Tibial artery (tissue), 4 donors: ENCODE measurements at regions of chr19 and their contacts with region 1.

Region 1: DNA sequence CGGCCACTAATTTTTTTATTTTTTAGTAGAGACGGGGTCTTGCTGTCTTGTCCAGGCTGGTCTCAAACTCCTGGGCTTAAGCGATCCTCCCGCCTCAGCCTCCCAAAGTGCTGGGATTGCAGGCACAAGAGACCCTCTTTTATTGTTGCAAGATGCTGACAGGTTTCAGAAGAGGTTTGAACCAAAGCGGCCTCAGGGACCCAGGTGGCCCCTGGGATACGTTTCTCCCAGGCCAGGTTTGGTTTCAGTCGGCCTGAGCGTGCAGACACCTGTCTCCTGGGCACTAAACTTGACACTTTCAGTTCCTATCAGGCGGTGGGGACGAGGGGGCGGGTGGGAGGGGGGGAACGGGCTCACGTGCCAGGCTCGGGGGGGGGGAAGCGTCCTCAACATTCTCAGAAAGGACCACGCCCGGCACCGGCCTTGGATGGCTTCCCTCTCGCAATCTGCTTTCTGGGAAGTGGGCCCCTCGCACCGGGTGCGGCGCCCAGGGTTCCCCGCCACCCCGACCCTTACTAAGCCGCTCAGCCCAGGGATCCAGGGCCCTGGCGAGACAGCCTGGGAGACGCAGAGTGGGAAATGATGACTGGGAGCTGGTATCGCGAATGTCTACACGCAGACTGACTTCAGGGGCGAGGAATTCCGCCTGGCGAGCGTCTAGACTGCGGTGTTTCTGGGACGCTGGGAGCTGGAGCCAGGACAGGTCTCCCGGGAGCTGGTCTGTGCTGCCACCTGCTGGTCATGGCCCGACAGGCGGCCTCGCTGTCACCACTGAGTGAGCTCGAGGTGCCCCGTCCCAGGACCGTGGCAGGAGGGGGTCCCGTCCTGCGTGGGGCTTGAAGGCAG is 91.6 kb downstream of the GNG7 start:
- DNase-seq: peak; percentile 90 to 96
- H3K4me3 ChIP-seq: peak overlapping the region; percentile 44 to 57
- H3K27ac ChIP-seq: peak overlapping the region; percentile 87 to 94
- H3K4me1 ChIP-seq: peaks cover 0 to 30% (median 18%) of the 10 kb centered on the region in 4 donors
- H3K27me3 ChIP-seq: peaks cover 0 to 15% of the 10 kb centered on the region in 2 donors
- CTCF ChIP-seq: peak; percentile 99

Region 2: DNA sequence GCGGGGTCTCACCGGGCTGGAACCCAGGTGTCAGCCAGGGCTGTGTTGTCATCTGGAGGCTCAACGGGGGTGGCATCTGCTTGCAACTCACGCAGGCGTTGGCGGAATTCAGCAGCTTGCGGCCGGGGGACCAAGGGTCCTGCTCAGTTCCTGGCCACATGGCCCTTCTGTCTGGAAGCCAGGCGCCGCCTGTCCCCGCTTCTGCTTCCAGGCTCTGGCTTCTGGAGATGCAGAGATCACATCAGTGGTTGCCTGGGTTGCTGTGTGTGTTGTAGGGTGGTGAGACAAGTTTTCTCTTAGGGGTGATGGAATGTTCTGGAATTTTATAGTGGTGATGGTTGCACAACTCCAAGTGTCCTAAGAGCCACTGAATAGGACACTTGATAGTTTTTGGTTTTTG is 700.7 kb before region 1 on chr19:
- intact Hi-C with region 1: no loop called
- DNase-seq: no peak
- H3K4me3 ChIP-seq: no peak overlapping the region
- H3K27ac ChIP-seq: no peak overlapping the region
- H3K4me1 ChIP-seq: peaks cover 0 to 53% (median 6%) of the 10 kb centered on the region in 4 donors
- H3K27me3 ChIP-seq: no peaks in the 10 kb centered on the region
- CTCF ChIP-seq: no peak

Region 3: DNA sequence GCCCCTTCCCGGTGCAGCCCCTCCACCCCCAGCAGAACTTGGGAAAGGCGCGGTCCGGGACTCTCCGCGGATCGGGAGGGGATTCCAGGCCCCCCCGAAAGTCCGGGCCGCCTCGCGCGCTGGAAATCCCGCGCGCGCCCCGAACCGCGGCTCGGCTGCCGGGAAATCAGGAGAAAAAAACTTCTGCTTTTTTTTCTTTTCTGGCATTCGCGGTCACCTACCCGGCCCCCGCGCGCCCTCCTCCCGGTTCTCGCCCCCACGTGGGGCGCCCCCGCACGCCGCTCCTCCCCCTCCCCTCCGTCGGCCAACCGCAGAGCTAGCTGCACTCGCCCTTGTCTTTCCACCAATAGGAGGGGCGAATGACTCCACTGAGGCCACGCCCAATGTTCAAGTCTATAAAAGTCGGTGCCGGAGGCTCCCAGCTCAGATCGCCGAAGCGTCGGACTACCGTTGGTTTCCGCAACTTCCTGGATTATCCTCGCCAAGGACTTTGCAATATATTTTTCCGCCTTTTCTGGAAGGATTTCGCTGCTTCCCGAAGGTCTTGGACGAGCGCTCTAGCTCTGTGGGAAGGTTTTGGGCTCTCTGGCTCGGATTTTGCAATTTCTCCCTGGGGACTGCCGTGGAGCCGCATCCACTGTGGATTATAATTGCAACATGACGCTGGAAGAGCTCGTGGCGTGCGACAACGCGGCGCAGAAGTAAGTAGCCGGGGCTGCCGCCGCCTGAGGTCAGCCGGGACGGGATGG is 135.0 kb before region 1 on chr19 and contains the start of gene GADD45B:
- intact Hi-C with region 1: loop called (anchors 1 kb)
- DNase-seq: peak; percentile 97 to 99
- H3K4me3 ChIP-seq: peak within 1 kb of the TSS; percentile 97 to 98
- H3K27ac ChIP-seq: peak within 1 kb of the TSS; percentile 96
- H3K4me1 ChIP-seq: peaks cover 6 to 22% (median 18%) of the 10 kb centered on the region in 4 donors
- H3K27me3 ChIP-seq: no peaks in the 10 kb centered on the region
- CTCF ChIP-seq: peak in 1 of 2 experiments; percentile 32

Region 4: GRCh38 chr19:2567996-2568395 is 42.9 kb before region 1 on chr19:
- intact Hi-C with region 1: no loop called
- DNase-seq: no peak
- H3K4me3 ChIP-seq: no peak overlapping the region
- H3K27ac ChIP-seq: no peak overlapping the region
- H3K4me1 ChIP-seq: no peaks in the 10 kb centered on the region
- H3K27me3 ChIP-seq: no peaks in the 10 kb centered on the region
- CTCF ChIP-seq: no peak

Region 5: DNA sequence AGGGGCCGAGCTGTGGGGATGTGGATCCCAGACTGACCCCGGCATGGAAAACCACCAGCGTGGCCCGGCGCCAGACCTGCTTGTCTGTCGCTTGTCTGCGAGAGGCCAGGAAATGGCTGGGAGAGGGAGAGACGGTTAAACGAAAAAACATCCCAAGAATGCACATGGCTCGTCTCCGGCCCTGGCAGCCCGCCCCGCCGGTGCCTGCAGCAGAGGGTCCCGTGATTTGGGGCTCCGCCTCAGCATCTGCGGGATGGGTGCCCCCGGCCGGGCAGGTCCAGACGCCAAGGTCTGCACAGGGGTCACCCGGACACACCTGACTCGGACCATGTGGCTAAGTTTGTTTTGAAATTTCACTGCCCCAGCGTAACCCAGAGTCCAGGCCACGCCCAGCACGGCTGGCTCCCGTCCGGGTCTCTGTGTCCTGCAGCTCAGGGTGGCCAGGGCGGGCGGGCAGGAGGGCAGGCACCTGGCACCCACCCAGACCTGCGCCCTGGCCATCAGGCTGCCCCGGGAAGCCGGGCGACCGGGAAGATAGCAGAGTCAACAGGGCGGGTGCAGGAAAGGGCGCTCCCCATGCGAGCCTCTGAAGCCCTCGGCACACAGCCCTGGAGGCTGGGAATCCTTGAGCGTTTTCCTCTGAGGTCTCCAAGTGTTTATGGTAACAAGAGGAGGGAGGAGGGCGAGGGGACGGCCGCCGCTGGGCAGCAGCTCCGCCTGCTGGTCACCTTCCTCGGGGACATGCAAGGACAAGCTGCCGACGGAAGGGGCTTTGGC is 31.8 kb before region 1 on chr19:
- intact Hi-C with region 1: loop called (anchors 5 kb)
- DNase-seq: peak; percentile 92 to 97
- H3K4me3 ChIP-seq: peak overlapping the region; percentile 43 to 52
- H3K27ac ChIP-seq: peak overlapping the region; percentile 75 to 91
- H3K4me1 ChIP-seq: peaks cover 3 to 55% (median 45%) of the 10 kb centered on the region in 4 donors
- H3K27me3 ChIP-seq: no peaks in the 10 kb centered on the region
- CTCF ChIP-seq: peak; percentile 95 to 96